ENCODE measurements at regions of chr5 and their contacts with region 1.

Region 1: DNA sequence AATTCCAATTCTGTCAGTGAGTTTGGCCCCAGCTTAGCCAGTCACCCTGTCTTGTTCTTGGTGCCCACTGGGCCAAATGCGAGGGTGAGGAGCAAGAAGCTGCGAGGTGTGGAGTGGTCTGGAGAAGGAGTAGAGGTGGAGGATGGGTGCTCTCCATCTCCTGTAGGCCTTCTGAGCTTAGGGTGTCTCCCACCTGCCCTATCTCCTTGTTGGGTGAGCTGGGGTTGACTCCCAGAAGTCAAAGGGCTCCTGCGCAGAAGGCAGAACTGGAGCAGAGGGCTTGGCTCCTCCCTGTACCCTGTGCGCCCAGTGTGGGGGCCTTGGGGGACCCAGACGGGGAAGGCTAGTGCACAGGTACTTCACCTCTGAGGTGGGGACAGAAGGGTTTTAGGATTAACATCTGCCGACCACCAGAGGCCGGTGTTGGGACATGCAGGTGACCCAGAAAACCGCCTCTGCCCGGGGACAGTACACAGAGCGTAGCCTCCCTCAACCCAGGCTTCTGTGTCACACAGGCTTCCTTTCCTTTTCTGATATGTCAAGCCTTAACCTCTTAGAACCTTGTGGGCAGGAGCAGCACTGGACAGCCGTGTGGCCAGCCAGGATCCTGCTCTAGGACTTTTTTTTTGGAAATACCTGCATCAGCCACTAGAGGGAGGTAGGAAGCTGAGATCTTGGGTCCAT is 16.9 kb downstream of the IL5 start:
- DNase-seq: peak; percentile 42
- ATAC-seq: peak; percentile 86
- H3K4me3 Mint-ChIP-seq: peak overlapping the region; percentile 52
- H3K27ac Mint-ChIP-seq: no peak overlapping the region
- H3K4me1 Mint-ChIP-seq: no peaks in the 10 kb centered on the region
- H3K27me3 Mint-ChIP-seq: no peaks in the 10 kb centered on the region; the same call in 1 of the 2 replicates
- CTCF ChIP-seq: peak; percentile 89; the same call in 1 of the 2 replicates

Region 2: DNA sequence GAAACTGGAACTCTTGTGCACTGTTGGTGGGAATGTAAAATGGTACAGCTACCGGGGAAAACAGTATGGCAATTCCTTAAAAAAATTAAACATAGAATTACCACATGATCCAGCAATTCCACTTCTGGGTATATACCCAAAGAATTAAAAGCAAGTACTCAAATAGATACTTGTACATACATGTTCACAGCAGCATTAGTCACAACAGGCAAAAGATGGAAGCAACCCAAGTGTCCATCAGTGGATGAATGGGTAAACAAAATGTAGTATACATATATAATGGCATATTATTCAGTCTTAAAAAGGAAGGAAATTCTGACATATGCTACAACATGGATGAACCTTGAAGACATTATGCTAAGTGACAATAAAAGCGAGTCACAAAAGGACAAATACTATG is 164.3 kb before region 1 on chr5:
- CTCF ChIA-PET with region 1: no interaction called
- POLR2A ChIA-PET with region 1: no interaction called
- DNase-seq: no peak
- ATAC-seq: no peak
- H3K4me3 Mint-ChIP-seq: no peak overlapping the region
- H3K27ac Mint-ChIP-seq: no peak overlapping the region
- H3K4me1 Mint-ChIP-seq: no peaks in the 10 kb centered on the region
- H3K27me3 Mint-ChIP-seq: no peaks in the 10 kb centered on the region; the same call in 1 of the 2 replicates
- CTCF ChIP-seq: no peak

Region 3: DNA sequence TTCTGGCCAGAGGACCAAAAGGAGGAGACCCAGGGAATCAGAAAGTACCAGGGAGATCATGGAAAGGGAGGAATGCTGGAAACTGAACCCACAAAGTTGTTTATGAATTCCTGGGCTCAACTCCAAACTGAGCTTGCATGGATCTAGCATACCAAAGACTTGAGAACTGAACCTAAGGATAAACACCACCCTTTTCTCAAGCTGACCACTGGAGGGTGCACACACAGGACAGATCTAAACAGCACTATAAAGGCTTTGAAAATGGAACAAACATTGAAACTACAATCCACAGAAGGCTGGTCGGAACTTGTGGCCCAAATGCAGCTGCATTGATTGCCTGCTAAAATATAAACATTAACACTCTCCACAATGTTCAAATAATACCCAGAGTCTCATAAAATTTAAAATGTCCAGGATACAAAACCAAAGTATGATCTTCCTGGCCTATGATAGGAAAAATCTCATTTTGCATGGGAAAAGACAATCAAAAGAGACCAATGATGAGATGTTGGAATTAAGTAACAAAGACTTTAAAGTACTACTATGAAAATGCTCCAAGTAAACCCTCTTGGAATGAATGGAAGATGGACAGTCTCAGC is 20.2 kb before region 1 on chr5:
- CTCF ChIA-PET with region 1: interaction called, 25 read pairs
- POLR2A ChIA-PET with region 1: no interaction called
- DNase-seq: no peak
- ATAC-seq: peak; percentile 72
- H3K4me3 Mint-ChIP-seq: no peak overlapping the region
- H3K27ac Mint-ChIP-seq: 0 out of 2 replicates have a peak overlapping the region, but pooled peaks have one; percentile 24
- H3K4me1 Mint-ChIP-seq: peaks cover 8% of the 10 kb centered on the region; the same call in 1 of the 2 replicates
- H3K27me3 Mint-ChIP-seq: no peaks in the 10 kb centered on the region; the same call in 1 of the 2 replicates
- CTCF ChIP-seq: no peak

Region 4: GRCh38 chr5:132540764-132541163 is 14.3 kb after region 1 on chr5:
- CTCF ChIA-PET with region 1: interaction called, 26 read pairs
- POLR2A ChIA-PET with region 1: no interaction called
- DNase-seq: no peak
- ATAC-seq: peak; percentile 71
- H3K4me3 Mint-ChIP-seq: no peak overlapping the region
- H3K27ac Mint-ChIP-seq: no peak overlapping the region
- H3K4me1 Mint-ChIP-seq: 0 out of 2 replicates have a peak, but pooled peaks cover 4% of the 10 kb centered on the region
- H3K27me3 Mint-ChIP-seq: peaks cover 7% of the 10 kb centered on the region; the same call in 1 of the 2 replicates
- CTCF ChIP-seq: no peak